Heart right ventricle (tissue), 16 donors: ENCODE measurements at regions of chr7 and their contacts with region 1.

Region 1: DNA sequence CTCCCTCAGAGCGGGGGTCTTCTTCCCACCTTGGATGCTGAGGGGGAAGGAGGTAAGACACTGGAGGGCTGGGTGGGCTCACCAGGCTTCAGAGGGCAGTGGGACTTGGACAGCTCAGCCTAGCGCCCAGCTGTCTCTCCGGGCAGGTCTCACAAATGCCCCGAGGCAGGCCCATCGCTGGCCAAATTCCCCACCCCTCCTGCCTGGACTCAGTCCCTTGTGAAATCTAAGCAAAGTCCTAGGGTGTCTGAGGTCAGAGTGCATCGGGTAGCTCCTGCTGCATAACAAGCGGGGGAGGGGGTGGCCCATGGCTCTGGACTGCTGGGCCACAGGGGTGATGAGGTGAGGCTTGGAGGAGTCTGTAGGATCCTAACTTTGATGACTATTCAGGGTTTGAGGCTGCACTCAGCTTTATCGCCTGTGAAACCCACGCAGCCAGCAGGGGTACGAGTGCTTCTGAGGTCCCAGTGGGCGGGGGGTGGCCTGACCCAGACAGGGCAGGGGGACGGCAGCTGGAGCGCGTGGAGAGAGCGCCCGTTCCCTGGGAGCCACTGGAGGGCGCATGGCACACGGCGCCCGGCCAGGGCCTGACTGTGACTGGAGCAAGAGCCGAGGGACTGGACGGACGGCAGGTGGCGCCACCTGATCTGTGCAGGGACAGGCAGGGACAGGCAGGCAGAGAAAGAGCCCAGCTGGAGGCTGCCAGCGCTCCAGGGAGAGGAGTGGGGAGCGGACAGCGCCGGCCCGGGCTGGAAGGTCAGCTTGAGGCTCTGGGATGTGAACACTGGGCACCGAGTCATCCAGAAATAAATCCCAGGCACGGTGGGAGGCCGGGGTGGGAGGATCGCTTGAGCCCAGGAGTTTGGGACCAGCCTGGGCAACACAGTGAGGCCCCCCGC is 10.0 kb downstream of the CYP2W1 start:
- DNase-seq: peak; percentile 97 to 99
- ATAC-seq: peak; percentile 92 to 98 (median 96)
- H3K4me3 ChIP-seq: no peak overlapping the region
- H3K27ac ChIP-seq: no peak overlapping the region
- H3K4me1 ChIP-seq: peaks cover 0 to 30% (median 17%) of the 10 kb centered on the region in 9 donors
- H3K27me3 ChIP-seq: peaks cover 0 to 14% (median 11%) of the 10 kb centered on the region in 7 donors
- CTCF ChIP-seq: peak in 8 of 9 donors; percentile 99 to 100 (median 99)

Region 2: DNA sequence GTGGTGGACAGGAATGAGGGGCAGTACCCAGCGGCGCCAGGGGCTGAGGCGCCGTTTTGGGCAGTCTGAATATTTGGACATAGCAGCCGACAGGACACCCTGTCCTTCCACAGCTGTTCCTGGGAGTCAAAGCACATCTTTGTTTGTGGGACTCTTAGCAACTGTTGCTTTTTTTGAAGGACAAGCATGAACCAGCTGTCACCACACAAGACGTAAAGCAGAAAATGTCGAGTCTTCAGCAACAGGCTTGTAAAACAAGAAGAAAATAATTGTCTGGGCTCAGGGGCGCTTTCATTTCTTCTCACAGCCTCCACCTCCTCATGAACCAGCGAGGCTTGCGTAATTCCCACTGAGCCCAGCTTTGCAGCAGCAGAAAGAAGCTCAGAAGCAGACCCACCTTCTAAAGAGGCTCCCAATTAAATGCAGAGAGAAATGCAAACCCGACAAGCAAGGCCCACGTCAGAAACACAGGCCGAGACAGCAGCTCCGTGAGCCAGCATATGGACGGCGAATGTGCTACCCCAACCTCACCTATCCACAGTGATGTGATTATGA is 335.3 kb before region 1 on chr7:
- intact Hi-C with region 1: no loop called
- DNase-seq: no peak
- ATAC-seq: peak; percentile 78 to 97 (median 88)
- H3K4me3 ChIP-seq: peak overlapping the region in 1 of 10 donors; percentile 13
- H3K27ac ChIP-seq: peak overlapping the region in 9 of 10 donors; percentile 29 to 84 (median 73)
- H3K4me1 ChIP-seq: peaks cover 0 to 19% (median 6%) of the 10 kb centered on the region in 9 donors
- H3K27me3 ChIP-seq: no peaks in the 10 kb centered on the region
- CTCF ChIP-seq: no peak

Region 3: GRCh38 chr7:977326-978048 is 15.5 kb before region 1 on chr7:
- intact Hi-C with region 1: no loop called
- DNase-seq: no peak
- ATAC-seq: no peak
- H3K4me3 ChIP-seq: no peak overlapping the region
- H3K27ac ChIP-seq: no peak overlapping the region
- H3K4me1 ChIP-seq: peaks cover 7 to 36% (median 27%) of the 10 kb centered on the region in 9 donors
- H3K27me3 ChIP-seq: no peaks in the 10 kb centered on the region
- CTCF ChIP-seq: no peak

Region 4: DNA sequence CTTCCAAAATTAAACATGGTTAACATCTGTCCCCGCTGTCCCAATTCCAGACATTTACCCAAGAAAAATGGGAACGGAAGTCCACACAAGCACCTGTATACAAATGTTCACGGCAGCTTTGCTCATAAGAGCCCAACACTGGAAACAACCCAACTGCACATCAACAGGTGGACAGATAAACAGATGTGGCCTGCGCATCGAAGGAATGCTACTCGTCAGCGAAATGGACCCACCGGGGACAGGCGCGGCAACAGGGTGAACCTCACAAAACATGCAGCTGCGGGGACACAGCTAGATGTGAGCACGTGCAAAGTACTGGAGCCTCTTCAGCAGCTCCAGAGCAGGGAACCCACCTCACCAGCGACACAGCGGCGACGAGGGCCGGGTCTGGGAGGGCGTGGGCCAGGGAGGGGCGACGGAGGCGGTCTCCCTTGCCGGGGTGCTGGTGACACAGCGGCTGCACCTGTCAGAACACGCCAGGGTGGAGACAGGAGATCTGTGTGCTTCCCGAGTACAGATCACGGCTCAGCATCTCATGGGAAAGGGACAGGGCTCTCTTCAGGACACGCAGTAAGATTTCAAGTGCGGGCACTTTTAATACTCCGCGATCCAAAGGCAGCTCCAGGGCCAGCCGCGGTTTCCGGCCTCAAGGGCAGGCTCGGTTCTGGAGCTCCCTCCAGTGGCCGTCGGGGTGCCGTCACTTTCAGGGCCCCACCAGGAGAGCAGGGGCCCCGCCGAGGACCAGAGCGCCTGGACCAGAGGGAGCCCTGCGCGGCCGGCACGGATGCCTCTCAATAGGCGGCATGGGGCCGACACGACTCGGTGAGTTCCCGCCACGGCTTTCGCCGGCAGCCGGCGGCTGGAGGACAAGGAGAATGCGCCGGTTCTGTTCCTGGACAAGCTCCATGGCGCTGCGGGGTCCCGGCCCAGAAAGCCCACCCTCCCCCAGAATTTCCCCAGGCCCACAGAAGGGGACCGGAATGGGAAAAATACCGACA is 72.6 kb after region 1 on chr7:
- intact Hi-C with region 1: loop called (anchors 1 to 2 kb)
- DNase-seq: peak; percentile 85 to 87
- ATAC-seq: peak; percentile 89 to 95 (median 95)
- H3K4me3 ChIP-seq: peak overlapping the region in 9 of 10 donors; percentile 6 to 42 (median 25)
- H3K27ac ChIP-seq: no peak overlapping the region
- H3K4me1 ChIP-seq: peaks cover 7 to 27% (median 19%) of the 10 kb centered on the region in 9 donors
- H3K27me3 ChIP-seq: peaks cover 0 to 7% (median 0%) of the 10 kb centered on the region in 7 donors
- CTCF ChIP-seq: peak; percentile 95 to 99 (median 96)

Region 5: GRCh38 chr7:1137510-1138167 is 144.7 kb after region 1 on chr7:
- intact Hi-C with region 1: loop called in 6 of 10 experiments (anchors 10 kb)
- DNase-seq: no peak
- ATAC-seq: peak; percentile 53 to 89 (median 78)
- H3K4me3 ChIP-seq: peak overlapping the region; percentile 58 to 95 (median 74)
- H3K27ac ChIP-seq: peak overlapping the region in 9 of 10 donors; percentile 66 to 87 (median 75)
- H3K4me1 ChIP-seq: peaks cover 0 to 20% (median 16%) of the 10 kb centered on the region in 9 donors
- H3K27me3 ChIP-seq: no peaks in the 10 kb centered on the region
- CTCF ChIP-seq: no peak

Region 6: DNA sequence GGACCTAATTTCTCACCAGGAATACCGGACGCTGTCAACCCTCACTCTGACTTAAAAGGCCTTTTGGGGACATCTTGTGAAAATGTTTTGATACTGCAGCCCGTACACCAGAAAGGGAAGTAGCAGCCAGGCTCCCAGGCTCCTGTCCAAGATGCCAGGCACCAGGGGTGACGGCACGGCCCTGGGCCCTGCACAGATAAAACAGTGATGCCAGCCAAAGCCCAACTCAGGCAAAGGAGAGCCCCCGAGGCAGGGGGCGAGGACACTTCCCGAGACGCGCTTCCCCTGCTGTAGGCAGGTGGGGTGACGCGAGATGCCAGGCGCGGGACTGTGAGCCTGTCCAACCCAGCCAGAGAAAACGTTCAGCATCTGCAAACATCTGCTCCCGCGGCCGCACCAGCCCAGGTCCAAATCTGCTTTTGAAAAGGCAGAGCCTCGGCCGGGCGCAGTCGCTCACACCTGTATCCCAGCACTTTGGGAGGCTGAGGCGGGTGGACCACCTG is 151.4 kb after region 1 on chr7:
- intact Hi-C with region 1: loop called in 6 of 10 experiments (anchors 10 kb)
- DNase-seq: peak; percentile 44 to 50
- ATAC-seq: peak; percentile 82 to 97 (median 92)
- H3K4me3 ChIP-seq: no peak overlapping the region
- H3K27ac ChIP-seq: peak overlapping the region in 2 of 10 donors; percentile 26 to 42
- H3K4me1 ChIP-seq: peaks cover 0 to 11% (median 0%) of the 10 kb centered on the region in 9 donors
- H3K27me3 ChIP-seq: no peaks in the 10 kb centered on the region
- CTCF ChIP-seq: peak in 7 of 9 donors; percentile 32 to 64 (median 52)

Region 7: DNA sequence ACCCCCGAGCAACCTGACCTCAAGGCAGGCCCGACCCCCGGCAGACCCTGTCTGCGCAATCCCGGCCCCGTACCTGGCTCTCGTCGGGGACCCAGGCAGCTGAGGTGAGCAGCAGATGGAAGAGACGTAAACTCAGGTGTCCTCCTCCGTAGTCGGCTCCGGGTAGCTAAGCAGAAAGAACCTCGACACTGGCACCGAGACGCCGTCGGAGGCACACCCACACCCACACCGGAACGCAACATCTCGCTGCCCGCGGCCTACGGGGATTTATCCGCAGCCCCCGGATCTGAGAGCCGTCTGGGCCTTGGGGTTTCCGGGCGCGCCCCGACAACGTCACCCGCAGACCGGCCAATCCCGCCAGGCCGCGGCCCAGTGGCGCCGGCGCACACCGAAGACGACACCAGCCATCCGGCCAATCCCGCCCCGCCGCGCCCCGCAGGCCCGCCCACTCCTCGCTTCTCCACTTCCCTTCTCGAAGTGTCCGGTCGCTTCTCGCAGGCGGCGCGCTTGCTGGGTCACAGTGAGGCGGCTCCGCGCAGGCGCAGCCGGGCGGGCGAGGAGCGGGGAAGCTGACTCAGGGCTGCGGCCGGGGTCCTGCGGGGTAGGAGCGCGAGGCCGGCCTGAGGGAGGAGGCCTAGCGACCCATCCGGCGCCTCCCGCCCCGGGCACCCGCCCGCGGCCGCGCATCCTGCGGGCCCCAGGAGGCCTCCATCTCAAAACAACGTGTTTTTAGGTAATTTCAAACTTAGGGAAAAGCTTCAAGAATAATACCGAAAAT is 167.1 kb after region 1 on chr7 and contains the start of gene ZFAND2A:
- intact Hi-C with region 1: loop called in 2 of 10 experiments (anchors 10 kb)
- DNase-seq: peak; percentile 99
- ATAC-seq: peak; percentile 98 to 100 (median 99)
- H3K4me3 ChIP-seq: peak within 1 kb of the TSS; percentile 58 to 100 (median 91)
- H3K27ac ChIP-seq: peak within 1 kb of the TSS; percentile 85 to 100 (median 98)
- H3K4me1 ChIP-seq: peaks cover 7 to 28% (median 22%) of the 10 kb centered on the region in 9 donors
- H3K27me3 ChIP-seq: no peaks in the 10 kb centered on the region
- CTCF ChIP-seq: peak in 1 of 9 donors; percentile 3
- total RNA-seq, gene ZFAND2A: 4.4 to 11.2 (median 7.7) TPM

Region 8: DNA sequence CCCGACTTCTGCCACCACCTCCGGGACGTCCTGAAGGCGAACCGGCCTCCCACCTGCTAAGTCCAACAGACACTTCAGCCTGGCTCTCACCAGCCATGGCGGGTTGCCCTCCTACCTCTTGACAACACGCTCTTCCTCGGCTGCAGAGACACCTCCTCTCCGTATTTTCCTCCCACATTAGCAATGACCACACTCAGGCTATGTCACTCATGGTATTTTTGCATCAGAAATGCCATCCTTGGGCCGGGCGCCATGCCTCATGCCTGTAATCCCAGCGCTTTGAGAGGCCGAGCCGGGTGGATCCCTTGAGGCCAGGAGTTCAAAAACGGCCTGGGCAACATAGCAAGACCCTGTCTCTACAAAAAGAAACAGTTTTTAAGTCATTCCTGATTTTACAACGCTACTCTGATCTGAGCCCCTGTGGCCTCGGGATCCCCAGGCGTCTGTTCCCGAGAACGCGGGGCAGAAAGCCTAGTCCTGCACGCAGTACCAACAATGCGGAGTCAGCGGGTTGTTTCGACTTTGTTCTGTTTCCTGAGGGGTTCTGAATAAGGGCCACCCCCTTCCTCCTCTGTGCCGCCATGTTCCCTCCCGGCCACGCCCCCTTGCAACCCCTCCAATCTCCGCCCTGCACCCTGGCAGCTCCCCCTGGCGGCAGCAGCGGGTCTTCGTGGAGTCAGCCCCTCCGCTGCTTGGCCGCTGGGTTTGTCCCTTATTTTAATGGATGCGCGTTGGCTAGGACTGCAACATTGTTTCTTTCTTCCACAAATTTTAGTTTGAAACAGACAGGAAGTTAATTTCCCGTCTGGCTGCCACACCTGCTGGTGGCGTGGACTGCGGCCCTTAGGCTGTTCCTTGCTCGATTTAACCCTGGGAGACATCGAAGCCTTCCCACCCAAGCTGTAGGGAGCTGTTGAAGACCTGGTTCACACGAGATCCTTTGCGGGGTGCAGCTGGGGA is 176.7 kb after region 1 on chr7:
- intact Hi-C with region 1: loop called in 3 of 10 experiments (anchors 5 to 10 kb)
- DNase-seq: peak; percentile 80 to 88
- ATAC-seq: peak; percentile 77 to 98 (median 94)
- H3K4me3 ChIP-seq: peak overlapping the region in 8 of 10 donors; percentile 24 to 61 (median 50)
- H3K27ac ChIP-seq: peak overlapping the region in 9 of 10 donors; percentile 13 to 85 (median 59)
- H3K4me1 ChIP-seq: peaks cover 0 to 13% (median 5%) of the 10 kb centered on the region in 9 donors
- H3K27me3 ChIP-seq: no peaks in the 10 kb centered on the region
- CTCF ChIP-seq: peak; percentile 38 to 92 (median 80)

Region 9: DNA sequence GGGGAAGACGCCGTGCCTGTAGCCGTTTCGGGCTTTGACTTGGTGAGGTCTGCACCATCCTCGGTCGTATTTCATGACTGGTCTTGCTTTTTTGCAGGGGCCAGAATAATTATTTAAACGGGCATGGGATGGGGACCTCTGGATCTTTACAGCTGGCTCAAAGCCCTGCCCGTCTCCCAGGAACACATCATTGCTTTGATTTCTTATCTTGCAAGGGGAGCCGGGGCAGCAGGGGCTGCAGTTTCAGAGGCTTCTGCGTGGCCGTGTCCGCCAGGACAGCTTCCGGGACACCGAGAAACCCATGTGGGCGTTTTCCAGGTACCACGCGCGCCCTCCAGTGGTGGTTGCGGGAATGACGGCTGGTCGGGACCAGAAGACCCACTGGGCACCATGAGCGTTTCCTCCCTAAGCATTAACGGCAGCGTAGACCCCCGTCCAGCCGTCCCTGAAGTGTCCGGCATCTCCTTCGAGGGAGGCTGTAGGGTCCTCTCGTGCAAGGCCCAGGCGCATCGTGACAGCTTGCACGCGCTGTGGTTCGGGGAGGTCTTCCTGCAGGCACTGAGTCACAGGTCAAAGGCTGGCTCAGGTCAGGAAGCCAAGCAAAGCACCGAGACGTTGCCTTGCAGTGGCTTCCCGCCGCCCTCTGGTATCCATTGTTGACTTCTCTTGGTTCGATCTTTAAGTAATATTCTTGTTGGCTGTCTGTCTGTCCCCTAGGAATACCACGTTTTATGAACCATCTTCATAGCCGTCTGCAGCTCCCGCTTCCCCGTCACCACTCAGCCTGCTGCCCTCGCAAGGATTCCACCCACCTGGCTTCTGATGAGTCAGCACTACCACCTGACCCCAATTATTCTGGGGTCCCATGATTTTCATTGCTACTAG is 183.3 kb after region 1 on chr7:
- intact Hi-C with region 1: loop called in 2 of 10 experiments (anchors 5 to 10 kb)
- DNase-seq: peak; percentile 80 to 88
- ATAC-seq: peak; percentile 57 to 92 (median 82)
- H3K4me3 ChIP-seq: peak overlapping the region in 7 of 10 donors; percentile 17 to 38 (median 34)
- H3K27ac ChIP-seq: peak overlapping the region in 2 of 10 donors; percentile 39 to 65
- H3K4me1 ChIP-seq: peaks cover 0 to 17% (median 4%) of the 10 kb centered on the region in 9 donors
- H3K27me3 ChIP-seq: peaks cover 0 to 23% (median 0%) of the 10 kb centered on the region in 7 donors
- CTCF ChIP-seq: peak; percentile 79 to 94 (median 90)